Endothelial cell of umbilical vein (primary cell): ENCODE measurements at regions of chr19 and their contacts with region 1.

Region 1: DNA sequence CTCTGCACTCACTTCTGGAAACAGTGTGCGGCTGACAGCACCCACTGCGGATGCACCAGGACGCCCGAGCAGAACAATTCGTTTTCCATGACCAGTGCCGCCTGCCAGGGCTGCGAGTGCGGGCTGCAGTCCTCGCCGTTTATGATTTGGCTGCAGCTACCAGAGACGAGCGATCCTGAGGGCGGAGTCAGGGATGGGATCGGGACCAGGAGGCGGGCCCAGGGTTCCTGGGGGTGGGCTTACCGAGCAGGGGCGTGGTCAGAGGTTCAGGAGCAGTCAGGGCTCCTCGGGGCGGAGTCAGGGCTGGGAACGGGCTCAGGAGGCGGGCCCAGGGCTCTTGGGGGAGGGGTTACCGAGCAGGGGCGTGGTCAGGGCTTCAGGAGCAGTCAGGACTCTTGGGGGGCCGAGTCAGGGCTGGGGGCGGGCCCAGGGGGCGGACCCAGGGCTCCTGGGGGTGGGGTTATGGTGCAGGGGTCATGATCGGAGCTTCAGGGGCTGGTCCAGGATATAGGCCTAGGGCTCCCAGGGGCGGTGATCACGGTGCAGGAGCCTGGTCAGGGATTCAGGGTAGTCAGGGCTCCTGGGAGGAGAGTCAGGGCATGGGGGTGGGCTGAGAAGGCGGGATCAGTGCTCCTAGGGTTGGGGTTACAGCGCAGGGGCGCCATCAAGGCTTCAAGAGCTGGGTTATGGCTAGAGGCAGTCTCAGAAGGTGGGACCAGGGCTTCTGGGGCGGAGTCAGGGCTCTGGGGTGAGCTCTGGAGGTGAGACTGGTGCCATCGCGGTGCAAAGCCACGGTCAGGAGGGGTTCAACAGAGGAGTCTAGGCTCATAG is 1.7 kb downstream of the KLK4 start:
- DNase-seq: peak; percentile 47
- H3K4me3 ChIP-seq: no peak overlapping the region
- H3K27ac ChIP-seq: no peak overlapping the region
- H3K4me1 ChIP-seq: no peaks in the 10 kb centered on the region
- H3K27me3 ChIP-seq: peaks cover 18 to 24% of the 10 kb centered on the region in 2 experiments
- CTCF ChIP-seq: no peak
- POLR2A ChIP-seq: no peak

Region 2: GRCh38 chr19:50858896-50859295 is 50.6 kb before region 1 on chr19:
- CTCF ChIA-PET with region 1: no interaction called
- POLR2A ChIA-PET with region 1: no interaction called
- dilution Hi-C with region 1: no loop called
- intact Hi-C with region 1: no loop called
- DNase-seq: no peak
- H3K4me3 ChIP-seq: no peak overlapping the region
- H3K27ac ChIP-seq: no peak overlapping the region
- H3K4me1 ChIP-seq: no peaks in the 10 kb centered on the region
- H3K27me3 ChIP-seq: no peaks in the 10 kb centered on the region
- CTCF ChIP-seq: no peak
- POLR2A ChIP-seq: no peak

Region 3: GRCh38 chr19:52095172-52096014 is 1185.9 kb after region 1 on chr19 and contains the start of gene ZNF841:
- CTCF ChIA-PET with region 1: no interaction called
- POLR2A ChIA-PET with region 1: no interaction called
- dilution Hi-C with region 1: no loop called
- intact Hi-C with region 1: loop called (anchors 10 kb)
- DNase-seq: peak; percentile 96
- H3K4me3 ChIP-seq: peak within 1 kb of the TSS; percentile 47 to 94 (median 70)
- H3K27ac ChIP-seq: peak within 1 kb of the TSS; percentile 62
- H3K4me1 ChIP-seq: peaks cover 2% of the 10 kb centered on the region
- H3K27me3 ChIP-seq: no peaks in the 10 kb centered on the region
- CTCF ChIP-seq: no peak
- POLR2A ChIP-seq: peak; percentile 63
- total RNA-seq, gene ZNF841: 17.7 and 18.6 TPM in 2 replicates